Activated CD4-positive, alpha-beta T cell treated with anti-CD3 and anti-CD28 coated beads for 36 hours (primary cell): ENCODE measurements at regions of chr15 and their contacts with region 1.

Region 1: DNA sequence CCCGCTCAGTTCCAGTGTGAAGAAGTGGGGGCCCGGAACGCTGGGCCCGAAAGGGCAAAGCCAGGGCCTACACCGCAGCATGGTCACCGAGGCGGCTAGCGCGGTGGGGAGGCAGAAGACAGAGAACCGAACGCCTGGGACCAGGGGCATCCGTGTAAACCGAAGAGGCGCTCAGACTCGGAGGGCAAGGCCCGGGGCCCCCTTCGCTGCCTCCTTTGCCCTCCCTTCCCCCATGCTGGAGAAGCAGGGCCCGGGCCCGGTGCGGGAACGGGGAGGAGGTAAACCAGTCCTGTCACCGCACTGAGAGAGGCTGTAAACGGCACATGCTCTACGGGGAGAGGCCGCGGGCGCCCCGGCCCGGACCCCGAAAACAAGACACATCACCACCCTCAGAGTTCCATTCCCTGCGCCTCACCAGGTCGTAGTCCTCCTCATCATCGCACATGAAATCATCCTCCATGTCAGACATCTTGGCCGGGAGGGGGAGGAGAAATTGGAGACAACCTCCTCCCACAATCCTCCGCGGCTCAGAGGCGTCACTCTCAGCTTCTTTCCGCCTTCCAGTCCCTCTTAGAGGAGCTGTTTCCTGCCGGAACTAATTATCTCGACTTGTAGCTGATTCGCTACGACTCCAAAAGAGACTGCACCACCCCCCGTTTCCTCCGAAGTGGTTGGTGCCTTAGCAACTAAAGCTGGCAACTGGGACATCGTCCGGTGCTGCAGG is at the start of gene COPS2:
- DNase-seq: peak; percentile 95
- ATAC-seq: peak; percentile 96
- H3K4me3 Mint-ChIP-seq: peak within 1 kb of the TSS; percentile 96
- H3K27ac Mint-ChIP-seq: peak within 1 kb of the TSS; percentile 94
- H3K4me1 Mint-ChIP-seq: peaks cover 37% of the 10 kb centered on the region
- H3K27me3 Mint-ChIP-seq: no peaks in the 10 kb centered on the region
- total RNA-seq, gene COPS2: 82.6 to 95.9 TPM

Region 2: GRCh38 chr15:48330855-48331795 is 824.1 kb before region 1 on chr15 and contains the start of gene DUT:
- CTCF ChIA-PET with region 1: no interaction called
- POLR2A ChIA-PET with region 1: interaction called, 3 read pairs
- intact Hi-C with region 1: loop called in 1 of 2 experiments (anchors 1 kb)
- DNase-seq: peak; percentile 89
- ATAC-seq: peak; percentile 84
- H3K4me3 Mint-ChIP-seq: peak within 1 kb of the TSS; percentile 82
- H3K27ac Mint-ChIP-seq: peak within 1 kb of the TSS; percentile 95
- H3K4me1 Mint-ChIP-seq: peaks cover 28% of the 10 kb centered on the region
- H3K27me3 Mint-ChIP-seq: no peaks in the 10 kb centered on the region
- total RNA-seq, gene DUT: 371 to 500 TPM

Region 3: GRCh38 chr15:48877630-48878595 is 277.4 kb before region 1 on chr15 and contains the start of gene EID1:
- CTCF ChIA-PET with region 1: no interaction called
- POLR2A ChIA-PET with region 1: interaction called, 3 read pairs
- intact Hi-C with region 1: loop called (anchors 1 kb)
- DNase-seq: peak; percentile 96
- ATAC-seq: peak; percentile 91
- H3K4me3 Mint-ChIP-seq: peak within 1 kb of the TSS; percentile 98
- H3K27ac Mint-ChIP-seq: peak within 1 kb of the TSS; percentile 99
- H3K4me1 Mint-ChIP-seq: peaks cover 45% of the 10 kb centered on the region
- H3K27me3 Mint-ChIP-seq: peaks cover 7% of the 10 kb centered on the region
- total RNA-seq, gene EID1: 73.6 to 82.5 TPM

Region 4: DNA sequence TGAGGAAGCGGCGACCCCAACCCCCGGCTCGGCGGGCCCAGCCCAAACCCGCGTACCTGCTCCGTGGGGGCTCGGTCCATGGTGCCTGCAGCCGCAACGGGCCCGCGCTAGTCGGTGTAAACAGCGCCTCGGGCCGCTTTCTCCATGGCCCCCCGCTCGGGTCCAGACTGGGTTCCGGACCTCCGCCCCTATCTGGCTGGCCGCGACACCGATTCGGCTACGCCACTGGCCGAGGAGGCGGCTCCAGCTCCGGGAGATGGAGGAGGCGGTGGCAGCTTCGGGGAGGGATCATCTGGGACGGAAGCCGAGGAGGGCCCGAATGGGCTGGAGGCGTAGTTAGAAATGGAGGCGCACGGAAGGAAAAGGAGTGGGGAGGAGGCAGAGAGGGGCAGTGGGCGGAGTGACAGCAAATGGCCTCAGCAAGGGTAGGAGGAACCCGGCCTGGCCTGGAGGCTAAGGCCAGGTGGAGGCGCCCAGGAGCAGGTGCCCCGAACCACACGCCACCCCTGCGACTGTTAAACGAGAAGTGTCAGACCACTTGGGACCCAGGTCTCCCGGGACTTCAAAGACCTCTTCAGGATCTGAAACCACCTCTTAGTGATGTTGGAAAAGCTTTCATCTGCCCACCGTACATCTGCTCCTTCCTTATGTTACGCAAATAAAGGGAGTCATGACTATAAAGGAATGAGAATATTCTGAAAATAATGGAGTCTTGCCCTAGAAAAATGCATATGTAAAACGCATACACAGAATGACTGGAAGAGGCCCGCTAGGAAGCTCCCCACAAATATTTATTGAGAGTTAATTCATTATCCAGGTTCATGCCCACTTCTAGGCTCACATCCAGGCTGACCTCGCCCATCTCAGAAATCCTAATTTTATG is 108.8 kb before region 1 on chr15 and contains the start of gene SECISBP2L:
- CTCF ChIA-PET with region 1: interaction called, 4 read pairs
- POLR2A ChIA-PET with region 1: interaction called, 5 read pairs
- intact Hi-C with region 1: loop called (anchors 1 kb)
- DNase-seq: peak; percentile 95
- ATAC-seq: peak; percentile 97
- H3K4me3 Mint-ChIP-seq: peak within 1 kb of the TSS; percentile 92
- H3K27ac Mint-ChIP-seq: peak within 1 kb of the TSS; percentile 84
- H3K4me1 Mint-ChIP-seq: peaks cover 22% of the 10 kb centered on the region
- H3K27me3 Mint-ChIP-seq: no peaks in the 10 kb centered on the region
- total RNA-seq, gene SECISBP2L: 22.4 to 36.8 TPM

Region 5: DNA sequence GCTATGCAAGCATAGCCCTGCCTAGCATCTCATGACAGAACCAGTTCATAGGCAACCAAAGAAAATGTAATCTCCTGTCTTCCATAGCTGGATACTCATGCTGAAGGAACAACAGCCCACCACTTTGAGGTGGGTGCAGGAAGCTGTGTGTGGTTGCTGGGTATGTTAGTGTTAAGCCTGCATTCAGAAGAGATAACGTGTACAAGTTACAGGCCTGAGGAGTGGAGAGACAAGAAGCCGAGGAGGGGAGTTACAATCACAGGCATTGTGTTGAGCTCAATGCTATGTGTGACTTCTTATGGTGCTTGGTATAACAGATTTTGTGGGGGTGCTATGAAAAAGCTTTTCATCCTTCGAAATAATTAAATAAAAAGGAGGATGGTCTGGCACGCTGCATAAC is 66.3 kb before region 1 on chr15:
- CTCF ChIA-PET with region 1: no interaction called
- POLR2A ChIA-PET with region 1: no interaction called
- intact Hi-C with region 1: no loop called
- DNase-seq: no peak
- ATAC-seq: no peak
- H3K4me3 Mint-ChIP-seq: no peak overlapping the region
- H3K27ac Mint-ChIP-seq: no peak overlapping the region
- H3K4me1 Mint-ChIP-seq: no peaks in the 10 kb centered on the region
- H3K27me3 Mint-ChIP-seq: no peaks in the 10 kb centered on the region

Region 6: DNA sequence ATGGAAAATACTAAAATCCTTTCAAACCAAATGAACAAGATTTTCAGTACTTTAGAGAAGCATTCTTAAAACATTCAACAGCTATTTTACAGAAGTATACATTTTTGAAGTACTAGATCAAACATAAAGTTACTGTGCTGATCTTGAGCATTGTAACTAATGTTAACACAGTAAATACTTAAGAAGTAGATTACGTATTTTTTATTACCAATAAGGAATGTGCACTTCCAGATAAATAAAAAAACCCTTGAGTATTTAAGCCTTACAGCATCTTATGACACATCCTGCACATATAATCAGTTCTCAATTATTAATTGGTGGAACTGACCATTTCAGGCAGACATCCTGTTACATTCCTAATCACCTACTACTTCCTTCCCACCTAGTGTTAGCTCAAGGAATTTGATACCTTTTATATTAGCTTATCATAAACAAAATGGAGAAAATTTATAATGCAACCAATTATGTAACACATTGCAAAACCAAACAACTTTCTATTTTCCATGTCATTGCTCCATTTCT is 32.7 kb before region 1 on chr15:
- CTCF ChIA-PET with region 1: no interaction called
- POLR2A ChIA-PET with region 1: no interaction called
- intact Hi-C with region 1: no loop called
- DNase-seq: no peak
- ATAC-seq: no peak
- H3K4me3 Mint-ChIP-seq: no peak overlapping the region
- H3K27ac Mint-ChIP-seq: no peak overlapping the region
- H3K4me1 Mint-ChIP-seq: no peaks in the 10 kb centered on the region
- H3K27me3 Mint-ChIP-seq: no peaks in the 10 kb centered on the region

Region 7: DNA sequence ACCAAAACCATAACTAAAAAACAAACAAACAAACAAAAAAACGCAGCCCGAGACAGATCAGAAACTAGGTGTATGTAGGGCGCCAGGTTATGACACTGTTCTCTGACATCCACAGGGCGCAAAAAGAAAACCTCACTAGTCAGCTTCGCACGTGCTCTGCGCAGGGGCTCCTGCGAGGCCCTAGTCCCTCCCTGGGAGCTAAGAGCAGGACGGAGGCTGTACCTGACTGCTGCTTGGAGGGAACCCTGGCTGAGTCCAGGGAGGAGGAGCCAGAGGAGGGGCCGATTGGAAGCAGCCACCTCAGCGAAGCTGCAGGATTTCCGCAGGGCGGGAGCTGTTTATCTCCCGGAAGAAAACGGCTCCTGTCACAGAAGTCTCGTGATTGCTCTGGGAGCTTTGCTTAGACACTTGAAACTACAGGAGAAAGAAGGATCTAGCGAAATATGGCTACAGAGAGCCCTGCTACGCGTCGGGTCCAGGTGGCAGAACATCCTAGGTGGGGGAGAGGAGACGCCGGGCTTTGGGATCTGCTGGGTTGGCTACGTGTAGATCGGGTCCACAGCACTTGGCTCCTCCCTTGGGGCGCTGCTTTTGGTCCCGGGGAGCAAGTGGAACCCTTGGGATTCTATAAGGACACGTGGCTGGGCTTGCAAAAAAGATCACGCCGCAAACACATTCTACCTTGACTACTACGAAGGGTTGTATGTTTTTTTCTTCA is 14.8 kb after region 1 on chr15 and contains the start of gene GALK2:
- CTCF ChIA-PET with region 1: interaction called, 11 read pairs
- POLR2A ChIA-PET with region 1: interaction called, 25 read pairs
- intact Hi-C with region 1: loop called (anchors 1 kb)
- DNase-seq: peak; percentile 90
- ATAC-seq: peak; percentile 99
- H3K4me3 Mint-ChIP-seq: peak within 1 kb of the TSS; percentile 82
- H3K27ac Mint-ChIP-seq: peak within 1 kb of the TSS; percentile 90
- H3K4me1 Mint-ChIP-seq: peaks cover 29% of the 10 kb centered on the region
- H3K27me3 Mint-ChIP-seq: no peaks in the 10 kb centered on the region
- total RNA-seq, gene GALK2: 19.9 to 27.1 TPM

Region 8: GRCh38 chr15:49620658-49621368 is 465.5 kb after region 1 on chr15 and contains the starts of genes DTWD1 and FAM227B:
- CTCF ChIA-PET with region 1: no interaction called
- POLR2A ChIA-PET with region 1: interaction called, 3 read pairs
- intact Hi-C with region 1: loop called in 1 of 2 experiments (anchors 1 kb)
- DNase-seq: peak; percentile 96
- ATAC-seq: peak; percentile 98
- H3K4me3 Mint-ChIP-seq: peak within 1 kb of the TSS; percentile 86
- H3K27ac Mint-ChIP-seq: peak within 1 kb of the TSS; percentile 88
- H3K4me1 Mint-ChIP-seq: peaks cover 36% of the 10 kb centered on the region
- H3K27me3 Mint-ChIP-seq: no peaks in the 10 kb centered on the region
- total RNA-seq, gene DTWD1: 20.4 to 22.4 TPM
- total RNA-seq, gene FAM227B: 2.7 to 4.4 TPM